GM18951 (cell line): ENCODE measurements at regions of chr17 and their contacts with region 1.

Region 1: DNA sequence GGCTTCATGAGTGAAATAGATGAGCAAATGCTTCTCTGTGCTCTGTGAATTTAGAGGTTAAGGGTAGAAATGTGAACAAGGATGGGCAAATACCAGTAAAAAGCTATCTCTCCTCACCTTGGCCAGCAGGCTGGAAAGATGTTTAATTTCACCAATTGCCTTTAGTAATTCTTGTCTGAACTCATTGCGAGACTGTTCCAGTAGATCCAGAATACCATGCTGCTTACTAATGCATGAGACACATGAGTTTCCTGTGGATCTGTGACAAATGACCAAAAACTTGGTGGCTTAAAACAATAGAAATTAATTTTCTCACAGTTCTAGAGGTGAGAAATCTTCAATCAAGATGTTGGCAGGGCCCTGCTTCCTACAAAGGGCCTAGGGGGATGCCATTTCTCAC is 9.3 kb upstream of the ZNF624 start:
- POLR2A ChIP-seq: no peak

Region 2: GRCh38 chr17:15744885-15745284 is 918.1 kb before region 1 on chr17:
- in situ Hi-C with region 1: loop called (anchors 10 kb)
- POLR2A ChIP-seq: no peak

Region 3: DNA sequence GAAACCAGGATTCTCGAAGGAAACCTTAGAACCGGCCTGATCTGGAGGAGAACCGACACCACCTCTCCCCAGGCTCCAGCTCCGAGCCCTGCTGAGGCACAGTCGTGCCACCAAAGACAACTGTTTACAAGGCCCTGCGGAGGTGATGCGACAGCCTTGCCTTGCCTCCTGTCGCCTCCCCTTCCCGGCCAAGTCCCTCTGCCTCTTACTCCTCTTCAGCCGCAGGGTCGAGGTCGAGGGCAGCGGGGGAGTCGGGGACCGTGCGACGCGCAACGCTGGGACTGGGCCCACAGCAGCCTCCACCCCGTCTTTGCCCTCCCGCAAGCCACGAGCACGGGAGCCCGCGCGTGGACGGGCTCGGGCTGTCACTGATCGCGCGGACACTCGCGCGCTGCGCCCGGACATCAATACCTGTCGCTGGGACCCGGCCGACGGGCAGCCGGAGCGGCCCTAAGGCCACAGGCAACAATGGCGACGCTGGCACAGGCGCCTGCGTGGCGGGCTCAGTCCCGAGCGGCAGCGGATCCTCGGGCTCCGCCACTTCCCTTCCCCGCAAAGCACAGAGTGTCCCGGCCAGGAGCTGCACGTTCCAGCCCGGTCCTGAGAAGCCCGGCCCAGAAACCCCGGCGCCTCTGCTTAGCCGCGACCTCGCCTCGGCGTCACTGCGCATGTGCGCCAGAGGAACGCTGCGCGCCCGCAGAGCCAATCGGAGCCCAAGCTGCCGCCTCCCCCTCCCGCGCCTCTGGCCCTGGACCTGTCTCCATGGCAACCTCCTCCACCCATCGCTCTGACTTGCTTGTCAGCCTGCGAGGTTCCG is 94.2 kb before region 1 on chr17 and contains the start of gene ZNF287:
- in situ Hi-C with region 1: no loop called
- POLR2A ChIP-seq: peak; percentile 71

Region 4: DNA sequence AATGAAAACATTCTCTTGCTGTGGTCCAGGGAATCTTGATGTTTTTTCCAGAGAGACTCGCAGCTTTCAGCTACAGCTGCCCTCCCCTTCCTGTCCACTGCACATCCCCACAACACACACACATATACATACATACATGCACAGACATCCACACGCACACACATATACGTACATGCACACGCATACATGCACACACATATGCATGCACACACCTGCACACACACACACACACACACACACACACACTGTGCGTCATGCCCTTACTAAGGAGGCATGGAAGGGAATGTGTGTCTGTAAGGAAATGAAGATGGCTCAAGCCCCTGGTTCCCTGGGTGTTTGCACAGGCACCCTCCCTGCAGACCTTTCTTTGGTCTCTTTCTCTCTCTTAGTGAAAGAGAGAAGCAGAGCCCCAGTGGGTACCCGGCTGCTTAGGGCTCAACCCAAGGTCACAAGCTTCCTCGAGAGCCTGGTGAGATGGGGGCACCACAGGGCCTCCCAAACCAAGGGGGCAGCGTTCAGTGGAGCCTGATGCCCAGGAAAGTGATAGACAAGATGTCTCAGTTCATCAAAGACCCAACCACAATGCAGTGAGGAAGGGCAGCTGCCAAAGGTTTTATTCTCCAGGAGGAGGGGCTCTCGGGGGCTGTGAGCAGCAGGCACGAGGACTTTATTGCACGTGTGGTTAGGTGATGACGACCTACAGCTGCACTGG is 275.7 kb after region 1 on chr17:
- in situ Hi-C with region 1: no loop called
- POLR2A ChIP-seq: no peak